Activated CD4-positive, alpha-beta memory T cell treated with anti-CD3 and anti-CD28 coated beads for 36 hours (primary cell): ENCODE measurements at regions of chr10 and their contacts with region 1.

Region 1: DNA sequence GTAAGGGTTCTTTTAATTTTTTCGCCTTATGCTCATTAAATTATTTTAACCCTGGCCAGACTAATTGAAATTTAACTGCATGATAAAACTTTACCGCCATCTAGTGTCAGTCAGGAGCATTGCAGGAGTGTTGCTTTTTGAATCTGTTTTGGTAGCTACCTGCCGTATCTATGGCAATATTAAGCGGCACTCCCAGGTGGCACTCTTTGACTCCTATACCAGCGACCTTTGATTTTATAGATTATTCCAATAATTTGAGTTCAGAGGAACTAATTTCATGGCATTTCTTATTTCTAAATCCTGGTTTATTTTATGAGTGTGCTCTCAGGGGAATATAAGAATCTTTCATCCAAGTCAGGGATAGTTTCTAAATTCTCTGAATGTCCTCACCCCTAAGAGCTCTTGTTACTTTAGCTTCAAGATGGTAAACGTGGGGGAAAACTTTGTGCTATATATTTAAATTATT is 198.9 kb downstream of the REEP3 start:
- DNase-seq: peak; percentile 47
- H3K4me3 Mint-ChIP-seq: no peak overlapping the region
- H3K27ac Mint-ChIP-seq: no peak overlapping the region
- H3K4me1 Mint-ChIP-seq: peaks cover 7% of the 10 kb centered on the region
- H3K27me3 Mint-ChIP-seq: peaks cover 5% of the 10 kb centered on the region

Region 2: GRCh38 chr10:63166742-63167258 is 553.3 kb before region 1 on chr10:
- CTCF ChIA-PET with region 1: interaction called, 319 read pairs
- POLR2A ChIA-PET with region 1: no interaction called
- intact Hi-C with region 1: loop called (anchors 1 kb)
- DNase-seq: no peak
- H3K4me3 Mint-ChIP-seq: no peak overlapping the region
- H3K27ac Mint-ChIP-seq: no peak overlapping the region
- H3K4me1 Mint-ChIP-seq: peaks cover 23% of the 10 kb centered on the region
- H3K27me3 Mint-ChIP-seq: no peaks in the 10 kb centered on the region

Region 3: DNA sequence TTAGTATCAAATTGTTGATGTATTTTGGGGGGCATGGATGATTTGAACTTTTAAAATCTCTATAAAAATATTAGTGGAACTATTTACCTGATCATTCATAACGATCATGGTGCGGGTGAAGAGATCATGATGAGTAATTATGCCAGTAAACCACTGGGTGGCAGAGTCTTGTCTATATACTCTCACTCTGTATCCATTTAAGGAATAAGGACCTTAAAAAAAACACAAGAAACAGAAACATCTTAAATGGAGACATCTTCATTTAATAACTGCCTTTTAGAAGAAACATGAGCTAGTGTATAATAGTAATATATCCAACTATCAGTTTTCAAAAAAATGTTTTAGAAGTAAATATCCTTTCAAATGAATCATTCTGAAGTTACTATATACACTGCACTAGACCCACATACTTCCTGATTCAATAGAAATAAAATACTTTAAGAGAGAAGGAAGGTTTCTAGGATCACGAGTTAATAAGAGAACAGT is 502.9 kb before region 1 on chr10:
- CTCF ChIA-PET with region 1: interaction called, 38 read pairs
- POLR2A ChIA-PET with region 1: no interaction called
- intact Hi-C with region 1: loop called (anchors 1 kb)
- DNase-seq: no peak
- H3K4me3 Mint-ChIP-seq: no peak overlapping the region
- H3K27ac Mint-ChIP-seq: peak overlapping the region; percentile 42
- H3K4me1 Mint-ChIP-seq: peaks cover 55% of the 10 kb centered on the region
- H3K27me3 Mint-ChIP-seq: no peaks in the 10 kb centered on the region

Region 4: DNA sequence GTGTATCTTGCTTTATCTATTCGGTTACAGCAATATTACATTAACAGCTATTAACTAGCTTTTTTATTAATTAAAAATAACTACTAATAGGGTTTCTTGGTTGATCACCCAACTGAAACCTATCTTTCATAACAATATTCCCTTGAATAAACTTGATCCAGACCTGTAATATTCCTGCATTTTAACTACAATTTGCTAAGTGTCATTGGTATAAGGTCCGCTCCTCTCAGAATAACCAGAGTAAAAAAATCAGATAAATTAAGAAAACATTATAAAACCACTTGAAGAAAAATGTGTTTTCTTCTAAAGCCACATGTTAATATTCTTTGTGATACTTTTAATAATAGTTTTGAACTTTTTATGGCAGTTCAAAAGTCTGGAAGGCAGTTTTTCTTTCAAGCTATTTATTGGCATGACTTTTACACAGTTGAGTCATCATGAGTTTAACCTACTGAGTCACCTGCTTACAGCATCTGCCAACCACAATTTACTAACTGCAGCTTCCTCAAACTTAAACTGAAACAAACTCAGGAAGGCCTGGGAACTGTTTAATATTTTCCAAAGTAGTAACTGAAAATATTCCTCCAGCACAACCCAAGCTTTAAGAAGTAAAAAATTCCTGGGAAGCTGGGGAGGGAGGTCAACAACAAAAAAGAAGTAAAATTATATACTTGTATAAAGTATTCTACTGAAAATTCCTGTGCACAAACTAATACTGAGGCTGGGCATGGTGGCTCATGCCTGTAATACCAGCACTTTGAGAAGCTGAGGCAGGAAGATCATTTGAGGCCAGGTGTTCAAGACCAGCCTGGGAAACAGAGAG is 483.8 kb before region 1 on chr10:
- CTCF ChIA-PET with region 1: interaction called, 10 read pairs
- POLR2A ChIA-PET with region 1: no interaction called
- intact Hi-C with region 1: no loop called
- DNase-seq: no peak
- H3K4me3 Mint-ChIP-seq: no peak overlapping the region
- H3K27ac Mint-ChIP-seq: peak overlapping the region; percentile 38
- H3K4me1 Mint-ChIP-seq: peaks cover 55% of the 10 kb centered on the region
- H3K27me3 Mint-ChIP-seq: no peaks in the 10 kb centered on the region

Region 5: GRCh38 chr10:63573068-63573697 is 146.9 kb before region 1 on chr10:
- CTCF ChIA-PET with region 1: interaction called, 8 read pairs
- POLR2A ChIA-PET with region 1: no interaction called
- intact Hi-C with region 1: loop called (anchors 2 kb)
- DNase-seq: no peak
- H3K4me3 Mint-ChIP-seq: no peak overlapping the region
- H3K27ac Mint-ChIP-seq: peak overlapping the region; percentile 40
- H3K4me1 Mint-ChIP-seq: peaks cover 28% of the 10 kb centered on the region
- H3K27me3 Mint-ChIP-seq: no peaks in the 10 kb centered on the region

Region 6: DNA sequence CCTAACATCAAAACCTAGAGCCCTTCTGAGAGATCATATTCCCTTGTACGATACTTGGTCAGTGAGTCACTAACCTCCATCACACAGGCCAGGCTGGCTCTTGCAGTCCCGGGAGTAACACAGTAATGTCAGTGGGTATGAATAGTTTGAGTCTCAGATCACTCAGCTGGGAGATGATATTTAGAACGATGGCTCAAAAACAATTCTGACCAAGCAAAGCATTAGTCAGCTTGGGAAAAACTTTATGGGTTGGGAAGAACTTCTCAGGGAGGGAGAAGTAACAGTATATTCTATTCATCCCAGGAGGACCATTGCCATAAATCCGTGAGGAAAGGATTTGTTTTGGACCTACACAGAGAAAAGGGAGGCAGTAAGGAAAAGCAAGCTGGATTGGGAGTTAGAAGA is 19.9 kb before region 1 on chr10:
- CTCF ChIA-PET with region 1: interaction called, 32 read pairs
- POLR2A ChIA-PET with region 1: no interaction called
- intact Hi-C with region 1: no loop called
- DNase-seq: peak; percentile 60
- H3K4me3 Mint-ChIP-seq: no peak overlapping the region
- H3K27ac Mint-ChIP-seq: no peak overlapping the region
- H3K4me1 Mint-ChIP-seq: peaks cover 8% of the 10 kb centered on the region
- H3K27me3 Mint-ChIP-seq: no peaks in the 10 kb centered on the region

Region 7: GRCh38 chr10:63767138-63767801 is 47.2 kb after region 1 on chr10:
- CTCF ChIA-PET with region 1: interaction called, 3 read pairs
- POLR2A ChIA-PET with region 1: no interaction called
- intact Hi-C with region 1: loop called (anchors 1 kb)
- DNase-seq: no peak
- H3K4me3 Mint-ChIP-seq: no peak overlapping the region
- H3K27ac Mint-ChIP-seq: no peak overlapping the region
- H3K4me1 Mint-ChIP-seq: no peaks in the 10 kb centered on the region
- H3K27me3 Mint-ChIP-seq: peaks cover 1% of the 10 kb centered on the region